CD4-positive, alpha-beta T cell (primary cell): ENCODE measurements at regions of chr6 and their contacts with region 1.

Region 1: DNA sequence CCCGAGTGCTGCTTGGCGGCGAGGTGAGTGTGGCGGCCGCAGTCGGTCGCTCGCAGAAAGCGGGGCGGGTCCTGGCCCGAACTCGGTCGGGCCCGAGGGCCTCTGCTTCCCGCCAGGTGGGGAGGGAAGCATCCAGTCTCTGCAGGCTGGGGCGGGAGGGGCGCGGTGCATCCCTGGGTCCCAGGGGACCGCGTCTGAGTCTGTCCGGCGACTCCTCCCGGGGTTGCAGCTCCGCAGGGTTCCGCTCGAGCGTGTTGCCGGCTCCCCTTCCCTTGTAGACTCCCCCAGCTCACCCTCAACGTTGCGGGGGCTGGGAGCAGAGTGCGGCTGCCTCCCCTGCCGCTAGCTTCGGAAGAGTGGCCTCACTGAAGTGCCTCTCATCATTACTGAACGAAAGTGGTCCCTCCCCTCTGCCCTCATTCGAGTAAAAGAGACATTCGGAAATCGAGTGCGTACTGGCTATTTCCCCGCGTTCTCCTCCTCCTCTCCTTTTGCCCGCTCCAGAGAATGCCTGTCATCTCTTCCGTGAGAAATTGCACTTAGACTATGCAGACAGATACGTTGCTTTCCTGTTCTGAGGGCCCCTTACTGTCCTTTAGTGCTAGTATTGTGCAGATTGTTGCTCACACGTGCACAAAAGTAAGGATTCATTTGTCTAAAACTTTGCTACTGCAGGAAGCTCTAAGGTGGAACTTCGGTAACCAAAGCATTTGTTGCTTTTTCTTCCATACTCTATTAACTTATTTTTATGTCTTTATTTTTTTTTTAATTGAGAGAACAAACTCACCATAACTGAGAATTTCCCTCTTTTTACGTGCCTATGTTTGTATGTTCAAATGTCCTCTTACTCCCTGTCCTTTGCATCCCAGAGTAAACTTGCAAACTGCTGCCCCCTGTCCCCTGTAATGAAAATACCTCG is 751 bp downstream of the MAP3K4 start:
- DNase-seq: peak in 12 of 14 experiments; percentile 3 to 75 (median 30)
- ATAC-seq: peak; percentile 65
- H3K4me3 ChIP-seq: peak overlapping the region; percentile 96
- H3K4me3 Mint-ChIP-seq: peak overlapping the region; percentile 97
- H3K27ac ChIP-seq: peak overlapping the region; percentile 72 to 83
- H3K27ac Mint-ChIP-seq: peak overlapping the region; percentile 90
- H3K4me1 ChIP-seq: peaks cover 16% of the 10 kb centered on the region
- H3K4me1 Mint-ChIP-seq: peaks cover 55% of the 10 kb centered on the region
- H3K27me3 ChIP-seq: no peaks in the 10 kb centered on the region
- H3K27me3 Mint-ChIP-seq: peaks cover 4% of the 10 kb centered on the region
- CTCF ChIP-seq: peak; percentile 59

Region 2: GRCh38 chr6:160960839-160961238 is 31.5 kb before region 1 on chr6:
- CTCF ChIA-PET with region 1: no interaction called
- POLR2A ChIA-PET with region 1: no interaction called
- intact Hi-C with region 1: no loop called
- DNase-seq: no peak
- ATAC-seq: no peak
- H3K4me3 ChIP-seq: no peak overlapping the region
- H3K4me3 Mint-ChIP-seq: no peak overlapping the region
- H3K27ac ChIP-seq: no peak overlapping the region
- H3K27ac Mint-ChIP-seq: no peak overlapping the region
- H3K4me1 ChIP-seq: no peaks in the 10 kb centered on the region
- H3K4me1 Mint-ChIP-seq: no peaks in the 10 kb centered on the region
- H3K27me3 ChIP-seq: no peaks in the 10 kb centered on the region
- H3K27me3 Mint-ChIP-seq: peaks cover 15% of the 10 kb centered on the region
- CTCF ChIP-seq: no peak

Region 3: DNA sequence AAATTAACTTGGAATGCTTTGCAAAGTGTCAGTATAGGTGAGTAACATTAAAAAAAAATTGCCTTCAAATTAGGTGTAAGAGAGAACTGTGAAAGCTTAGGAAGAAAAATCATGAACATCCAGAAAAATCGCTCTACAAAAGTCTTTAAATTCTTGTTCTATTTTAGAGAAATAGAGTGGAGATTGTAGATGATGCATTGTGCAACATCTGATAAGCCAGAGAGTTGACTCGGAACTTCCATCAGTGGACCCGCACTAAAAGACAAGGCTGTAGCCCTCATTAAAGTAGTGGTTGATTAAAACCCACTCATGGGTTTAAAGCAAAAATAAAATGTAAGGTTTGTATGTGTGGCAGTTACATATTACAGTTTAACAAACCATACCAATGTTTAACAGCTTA is 35.1 kb after region 1 on chr6:
- CTCF ChIA-PET with region 1: interaction called, 10 read pairs
- POLR2A ChIA-PET with region 1: no interaction called
- intact Hi-C with region 1: no loop called
- DNase-seq: no peak
- ATAC-seq: no peak
- H3K4me3 ChIP-seq: no peak overlapping the region
- H3K4me3 Mint-ChIP-seq: no peak overlapping the region
- H3K27ac ChIP-seq: no peak overlapping the region
- H3K27ac Mint-ChIP-seq: no peak overlapping the region
- H3K4me1 ChIP-seq: peaks cover 4% of the 10 kb centered on the region
- H3K4me1 Mint-ChIP-seq: peaks cover 78% of the 10 kb centered on the region
- H3K27me3 ChIP-seq: no peaks in the 10 kb centered on the region
- H3K27me3 Mint-ChIP-seq: no peaks in the 10 kb centered on the region
- CTCF ChIP-seq: no peak

Region 4: GRCh38 chr6:161079566-161080262 is 87.4 kb after region 1 on chr6:
- CTCF ChIA-PET with region 1: no interaction called
- POLR2A ChIA-PET with region 1: interaction called, 16 read pairs
- intact Hi-C with region 1: loop called (anchors 5 kb)
- DNase-seq: peak in 12 of 14 experiments; percentile 20 to 84 (median 52)
- ATAC-seq: peak; percentile 54
- H3K4me3 ChIP-seq: peak overlapping the region; percentile 30
- H3K4me3 Mint-ChIP-seq: no peak overlapping the region
- H3K27ac ChIP-seq: peak overlapping the region; percentile 42 to 66
- H3K27ac Mint-ChIP-seq: no peak overlapping the region
- H3K4me1 ChIP-seq: peaks cover 77% of the 10 kb centered on the region
- H3K4me1 Mint-ChIP-seq: peaks cover 2% of the 10 kb centered on the region
- H3K27me3 ChIP-seq: no peaks in the 10 kb centered on the region
- H3K27me3 Mint-ChIP-seq: no peaks in the 10 kb centered on the region
- CTCF ChIP-seq: no peak

Region 5: DNA sequence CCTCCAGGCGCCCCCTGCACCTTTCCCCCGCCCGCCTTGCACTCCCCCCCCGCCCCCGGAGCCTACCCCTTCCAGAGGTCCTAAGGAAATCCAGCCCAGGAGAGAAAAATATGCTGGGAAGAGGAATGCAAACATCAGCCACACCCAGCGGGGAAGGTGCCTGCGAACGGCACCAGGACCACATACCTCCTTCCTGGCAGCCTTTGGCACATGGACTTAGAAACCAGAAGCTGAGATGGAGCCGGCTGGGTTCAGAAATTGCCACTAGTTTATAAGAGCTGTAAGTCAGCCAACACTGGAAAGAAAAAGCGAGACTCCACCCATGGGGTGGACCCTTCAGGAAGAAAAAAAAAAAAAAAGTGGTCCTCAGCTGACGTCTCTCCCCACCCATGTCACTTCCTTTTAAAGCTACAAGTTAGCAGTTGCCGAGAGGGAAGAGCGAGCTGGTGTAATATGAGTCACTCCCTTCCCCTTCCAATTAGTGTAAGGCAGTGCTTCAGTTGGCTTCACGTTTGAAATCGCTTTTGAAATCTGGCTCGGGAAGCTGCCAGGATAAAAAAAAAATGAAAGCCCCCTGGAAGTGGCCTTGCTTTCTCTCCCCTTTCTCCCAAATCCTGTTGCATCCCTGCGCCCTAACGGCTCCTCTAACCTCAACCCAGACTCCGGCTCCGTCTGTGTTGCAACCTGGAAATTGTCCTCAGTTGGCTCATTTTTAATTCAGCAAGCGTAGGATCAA is 281.6 kb after region 1 on chr6 and contains the start of gene AGPAT4:
- CTCF ChIA-PET with region 1: no interaction called
- POLR2A ChIA-PET with region 1: interaction called, 18 read pairs
- intact Hi-C with region 1: loop called (anchors 2 to 5 kb)
- DNase-seq: peak; percentile 36 to 94 (median 51)
- ATAC-seq: peak; percentile 92
- H3K4me3 ChIP-seq: peak within 1 kb of the TSS; percentile 70
- H3K4me3 Mint-ChIP-seq: peak within 1 kb of the TSS; percentile 91
- H3K27ac ChIP-seq: peak within 1 kb of the TSS; percentile 35 to 82
- H3K27ac Mint-ChIP-seq: peak within 1 kb of the TSS; percentile 92
- H3K4me1 ChIP-seq: peaks cover 21% of the 10 kb centered on the region
- H3K4me1 Mint-ChIP-seq: peaks cover 20% of the 10 kb centered on the region
- H3K27me3 ChIP-seq: no peaks in the 10 kb centered on the region
- H3K27me3 Mint-ChIP-seq: no peaks in the 10 kb centered on the region
- CTCF ChIP-seq: no peak
- total RNA-seq, gene AGPAT4: 2.8 to 4.8 TPM

Region 6: DNA sequence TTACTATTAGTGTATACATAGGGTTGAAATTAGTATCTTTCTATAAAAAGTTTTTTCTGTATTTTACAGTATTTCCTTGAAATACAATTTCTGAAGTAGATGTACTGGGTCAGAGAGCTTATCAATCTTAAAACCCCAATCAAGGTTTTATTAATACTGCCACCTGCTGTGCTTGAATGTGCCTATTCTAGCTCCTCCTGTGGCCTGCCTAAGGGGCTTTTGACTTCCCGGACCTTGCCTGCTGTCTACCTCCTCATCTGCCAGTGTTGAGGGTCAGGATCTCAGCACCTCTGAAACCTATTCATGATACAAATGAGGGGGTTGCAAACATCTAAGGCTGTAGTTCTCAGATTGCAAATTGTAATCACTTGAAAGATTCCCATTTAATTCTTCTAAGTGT is 1744.6 kb after region 1 on chr6:
- CTCF ChIA-PET with region 1: no interaction called
- POLR2A ChIA-PET with region 1: no interaction called
- intact Hi-C with region 1: loop called in 1 of 2 experiments (anchors 5 kb)
- DNase-seq: peak in 3 of 14 experiments; percentile 4 to 24 (median 8)
- ATAC-seq: no peak
- H3K4me3 ChIP-seq: no peak overlapping the region
- H3K4me3 Mint-ChIP-seq: no peak overlapping the region
- H3K27ac ChIP-seq: no peak overlapping the region
- H3K27ac Mint-ChIP-seq: no peak overlapping the region
- H3K4me1 ChIP-seq: peaks cover 5% of the 10 kb centered on the region
- H3K4me1 Mint-ChIP-seq: peaks cover 11% of the 10 kb centered on the region
- H3K27me3 ChIP-seq: no peaks in the 10 kb centered on the region
- H3K27me3 Mint-ChIP-seq: peaks cover 5% of the 10 kb centered on the region
- CTCF ChIP-seq: no peak